ENCODE measurements at regions of chr18 and their contacts with region 1.

Region 1: DNA sequence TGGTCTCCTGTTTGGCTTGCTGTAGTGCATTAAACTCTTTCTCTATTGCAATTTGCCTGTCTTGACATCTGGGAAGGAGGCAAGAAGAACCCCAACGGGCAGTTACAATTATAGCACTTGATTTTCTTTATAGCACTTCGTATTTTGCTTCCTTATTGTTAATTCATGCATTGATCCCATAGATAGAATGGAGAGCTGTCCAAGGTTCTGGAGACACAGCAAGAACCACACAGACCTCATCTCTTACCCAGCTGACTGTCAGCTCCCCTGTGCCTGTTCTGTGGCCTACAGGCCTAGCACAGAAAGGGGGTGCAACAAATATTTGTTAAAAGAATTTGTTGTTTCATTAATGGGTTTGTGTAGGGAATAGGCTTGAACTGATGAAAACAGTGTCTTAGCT is 194.3 kb downstream of the GALNT1 start:
- DNase-seq: no peak
- H3K4me3 ChIP-seq: no peak overlapping the region
- H3K27ac ChIP-seq: no peak overlapping the region
- H3K4me1 ChIP-seq: no peaks in the 10 kb centered on the region
- H3K27me3 ChIP-seq: no peaks in the 10 kb centered on the region
- CTCF ChIP-seq: no peak
- EP300 ChIP-seq: no peak
- POLR2A ChIP-seq: no peak

Region 2: DNA sequence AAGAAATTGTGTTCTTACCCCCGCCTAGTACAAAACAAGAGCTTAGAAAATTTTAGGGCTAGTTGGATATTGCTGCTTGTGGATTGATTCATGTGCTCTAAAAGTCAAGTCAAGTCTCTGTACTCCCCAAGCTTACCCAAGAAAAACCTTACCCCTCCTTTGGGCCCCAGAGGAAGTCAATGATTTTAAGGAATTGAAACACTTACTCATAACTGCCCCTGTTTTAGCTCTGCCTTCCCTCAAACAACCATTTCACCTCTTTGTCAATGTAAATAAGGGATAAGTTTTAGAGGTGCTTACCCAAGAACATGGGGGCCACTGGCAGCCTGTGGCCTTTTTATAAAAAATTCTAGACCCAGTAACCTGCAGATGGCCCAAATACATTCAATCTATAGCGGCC is 59.9 kb after region 1 on chr18:
- in situ Hi-C with region 1: loop called in 1 of 4 experiments (anchors 10 kb)
- intact Hi-C with region 1: no loop called
- DNase-seq: no peak
- H3K4me3 ChIP-seq: no peak overlapping the region
- H3K27ac ChIP-seq: no peak overlapping the region
- H3K4me1 ChIP-seq: no peaks in the 10 kb centered on the region
- H3K27me3 ChIP-seq: no peaks in the 10 kb centered on the region
- CTCF ChIP-seq: no peak
- EP300 ChIP-seq: no peak
- POLR2A ChIP-seq: no peak

Measured in transverse colon (tissue), 4 donors.